ENCODE measurements at regions of chr16 and their contacts with region 1.

Region 1: GRCh38 chr16:57091975-57092785 is at the start of gene CPNE2:
- DNase-seq: peak; percentile 34
- H3K4me3 Mint-ChIP-seq: peak within 1 kb of the TSS; percentile 72
- H3K27ac Mint-ChIP-seq: peak within 1 kb of the TSS; percentile 42
- H3K4me1 Mint-ChIP-seq: peaks cover 8% of the 10 kb centered on the region
- H3K27me3 Mint-ChIP-seq: peaks cover 27% of the 10 kb centered on the region
- total RNA-seq, gene CPNE2: 3.1 to 3.6 TPM

Region 2: GRCh38 chr16:57102888-57103858 is 11.0 kb after region 1 on chr16:
- CTCF ChIA-PET with region 1: interaction called, 23 read pairs
- POLR2A ChIA-PET with region 1: interaction called, 4 read pairs
- DNase-seq: no peak
- H3K4me3 Mint-ChIP-seq: no peak overlapping the region
- H3K27ac Mint-ChIP-seq: peak overlapping the region; percentile 36
- H3K4me1 Mint-ChIP-seq: peaks cover 25% of the 10 kb centered on the region
- H3K27me3 Mint-ChIP-seq: no peaks in the 10 kb centered on the region

Region 3: GRCh38 chr16:57115514-57116182 is 23.5 kb after region 1 on chr16:
- CTCF ChIA-PET with region 1: interaction called, 11 read pairs
- POLR2A ChIA-PET with region 1: no interaction called
- DNase-seq: no peak
- H3K4me3 Mint-ChIP-seq: no peak overlapping the region
- H3K27ac Mint-ChIP-seq: no peak overlapping the region
- H3K4me1 Mint-ChIP-seq: no peaks in the 10 kb centered on the region
- H3K27me3 Mint-ChIP-seq: no peaks in the 10 kb centered on the region

Region 4: DNA sequence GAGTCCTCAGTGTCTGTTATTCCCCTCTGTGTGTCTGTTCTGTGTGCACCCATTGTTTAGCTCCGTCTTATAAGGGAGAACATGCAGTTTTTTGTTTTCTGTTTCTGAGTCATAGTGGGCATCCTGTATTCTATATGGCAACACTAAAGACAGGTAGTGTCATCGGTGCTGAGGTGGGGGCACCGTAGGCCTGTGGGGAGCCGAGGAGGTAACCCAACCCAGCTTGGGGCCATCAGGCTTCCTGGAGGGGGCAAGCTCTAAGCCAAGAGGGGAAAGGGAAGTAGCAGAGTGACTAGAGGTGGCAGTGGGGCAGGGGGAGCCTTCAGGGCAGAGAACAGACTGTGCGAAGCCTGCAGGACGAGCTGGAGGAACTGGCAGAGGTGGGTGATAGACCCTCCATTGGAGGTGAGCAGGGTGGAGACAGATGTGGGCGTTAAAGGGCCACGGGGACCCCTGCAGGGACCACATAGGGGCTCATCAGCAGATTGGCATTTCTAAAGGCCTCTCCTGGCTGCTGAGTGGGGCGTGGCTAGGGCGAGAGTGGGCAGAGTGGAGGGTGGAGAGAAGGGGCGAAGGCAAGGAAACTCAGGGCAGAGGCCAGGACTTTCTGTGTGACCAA is 36.7 kb after region 1 on chr16:
- CTCF ChIA-PET with region 1: interaction called, 12 read pairs
- POLR2A ChIA-PET with region 1: no interaction called
- DNase-seq: peak; percentile 52
- H3K4me3 Mint-ChIP-seq: peak overlapping the region; percentile 9
- H3K27ac Mint-ChIP-seq: peak overlapping the region; percentile 88
- H3K4me1 Mint-ChIP-seq: peaks cover 85% of the 10 kb centered on the region
- H3K27me3 Mint-ChIP-seq: no peaks in the 10 kb centered on the region

Region 5: DNA sequence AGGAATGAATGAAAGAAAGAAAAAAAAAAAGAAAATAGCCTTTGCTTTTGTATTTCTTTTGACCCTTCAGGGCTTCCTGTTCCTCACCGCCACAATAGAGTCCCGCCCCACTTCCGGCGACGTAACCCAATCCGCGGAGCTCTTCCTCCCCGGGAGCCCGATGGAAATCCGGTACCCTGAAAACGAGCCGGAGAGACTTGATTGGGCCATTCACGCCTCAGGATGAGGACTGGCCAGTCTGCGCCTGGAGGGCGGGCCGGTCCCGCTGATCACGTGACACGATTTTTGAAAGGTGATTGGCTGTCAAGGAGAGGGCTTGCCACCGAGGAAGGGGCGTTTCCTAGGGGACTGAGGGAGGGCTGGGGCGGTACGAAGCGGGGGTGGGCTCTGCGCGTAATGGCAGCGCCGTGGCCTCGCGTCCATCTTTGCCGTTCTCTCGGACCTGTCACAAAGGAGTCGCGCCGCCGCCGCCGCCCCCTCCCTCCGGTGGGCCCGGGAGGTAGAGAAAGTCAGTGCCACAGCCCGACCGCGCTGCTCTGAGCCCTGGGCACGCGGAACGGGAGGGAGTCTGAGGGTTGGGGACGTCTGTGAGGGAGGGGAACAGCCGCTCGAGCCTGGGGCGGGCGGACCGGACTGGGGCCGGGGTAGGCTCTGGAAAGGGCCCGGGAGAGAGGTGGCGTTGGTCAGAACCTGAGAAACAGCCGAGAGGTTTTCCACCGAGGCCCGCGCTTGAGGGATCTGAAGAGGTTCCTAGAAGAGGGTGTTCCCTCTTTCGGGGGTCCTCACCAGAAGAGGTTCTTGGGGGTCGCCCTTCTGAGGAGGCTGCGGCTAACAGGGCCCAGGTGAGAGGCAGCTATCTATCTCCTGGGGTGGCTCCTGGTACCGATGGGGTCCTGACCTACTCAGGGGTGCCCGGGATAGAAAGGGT is 94.0 kb after region 1 on chr16 and contains the starts of genes PSME3IP1 and RSPRY1:
- CTCF ChIA-PET with region 1: interaction called, 11 read pairs
- POLR2A ChIA-PET with region 1: no interaction called
- DNase-seq: peak; percentile 100
- H3K4me3 Mint-ChIP-seq: peak within 1 kb of the TSS; percentile 98
- H3K27ac Mint-ChIP-seq: peak within 1 kb of the TSS; percentile 91
- H3K4me1 Mint-ChIP-seq: peaks cover 54% of the 10 kb centered on the region
- H3K27me3 Mint-ChIP-seq: no peaks in the 10 kb centered on the region
- total RNA-seq, gene PSME3IP1: 115 to 137 TPM
- total RNA-seq, gene RSPRY1: 32.2 to 34.2 TPM

Measured in activated CD4-positive, alpha-beta T cell treated with anti-CD3 and anti-CD28 coated beads, Interleukin-2, amount 10 ng/mL, durations not matched to agents 7 days and 5 days (primary cell).